ENCODE measurements at regions of chr5 and their contacts with region 1.

Region 1: GRCh38 chr5:66742083-66742895 is 146.1 kb downstream of the MAST4 start:
- DNase-seq: peak; percentile 79
- ATAC-seq: peak; percentile 74

Region 2: GRCh38 chr5:66595756-66596635 is 146.3 kb before region 1 on chr5 and contains the start of gene MAST4:
- intact Hi-C with region 1: loop called (anchors 5 kb)
- DNase-seq: peak; percentile 92
- ATAC-seq: peak; percentile 96
- total RNA-seq, gene MAST4: 39.6 TPM